B cell (primary cell): ENCODE measurements at regions of chr5 and their contacts with region 1.

Region 1: GRCh38 chr5:6632917-6633468 is at the starts of genes NSUN2 and SRD5A1:
- DNase-seq: peak; percentile 97
- ATAC-seq: peak; percentile 89
- H3K4me3 ChIP-seq: peak within 1 kb of the TSS; percentile 74 to 91 (median 84)
- H3K4me3 Mint-ChIP-seq: peak within 1 kb of the TSS; percentile 95
- H3K27ac ChIP-seq: peak within 1 kb of the TSS; percentile 98 to 99
- H3K27ac Mint-ChIP-seq: peak within 1 kb of the TSS; percentile 99
- H3K4me1 ChIP-seq: peaks cover 16 to 28% of the 10 kb centered on the region in 2 donors
- H3K4me1 Mint-ChIP-seq: peaks cover 38% of the 10 kb centered on the region
- H3K27me3 ChIP-seq: no peaks in the 10 kb centered on the region
- H3K27me3 Mint-ChIP-seq: no peaks in the 10 kb centered on the region
- CTCF ChIP-seq: no peak
- total RNA-seq, gene NSUN2: 83.7 and 85.0 TPM in 2 replicates
- total RNA-seq, gene SRD5A1: 20.8 and 29.2 TPM in 2 replicates

Region 2: GRCh38 chr5:5523066-5523505 is 1109.9 kb before region 1 on chr5:
- CTCF ChIA-PET with region 1: no interaction called
- POLR2A ChIA-PET with region 1: no interaction called
- intact Hi-C with region 1: loop called (anchors 1 kb)
- DNase-seq: peak; percentile 79
- ATAC-seq: peak; percentile 80
- H3K4me3 ChIP-seq: peak overlapping the region in 2 of 5 experiments; percentile 36 to 40
- H3K4me3 Mint-ChIP-seq: peak overlapping the region; percentile 78
- H3K27ac ChIP-seq: no peak overlapping the region
- H3K27ac Mint-ChIP-seq: peak overlapping the region; percentile 83
- H3K4me1 ChIP-seq: peaks cover 7 to 9% of the 10 kb centered on the region in 2 donors
- H3K4me1 Mint-ChIP-seq: peaks cover 14% of the 10 kb centered on the region
- H3K27me3 ChIP-seq: peaks cover 0 to 2% (median 0%) of the 10 kb centered on the region in 4 experiments
- H3K27me3 Mint-ChIP-seq: no peaks in the 10 kb centered on the region
- CTCF ChIP-seq: no peak

Region 3: GRCh38 chr5:5752844-5753243 is 880.1 kb before region 1 on chr5:
- CTCF ChIA-PET with region 1: no interaction called
- POLR2A ChIA-PET with region 1: no interaction called
- intact Hi-C with region 1: loop called (anchors 5 kb)
- DNase-seq: peak; percentile 63
- ATAC-seq: peak; percentile 65
- H3K4me3 ChIP-seq: peak overlapping the region in 1 of 5 experiments; percentile 40
- H3K4me3 Mint-ChIP-seq: peak overlapping the region; percentile 81
- H3K27ac ChIP-seq: peak overlapping the region; percentile 62
- H3K27ac Mint-ChIP-seq: peak overlapping the region; percentile 90
- H3K4me1 ChIP-seq: peaks cover 52 to 59% of the 10 kb centered on the region in 2 donors
- H3K4me1 Mint-ChIP-seq: peaks cover 69% of the 10 kb centered on the region
- H3K27me3 ChIP-seq: no peaks in the 10 kb centered on the region
- H3K27me3 Mint-ChIP-seq: no peaks in the 10 kb centered on the region
- CTCF ChIP-seq: no peak

Region 4: GRCh38 chr5:6483880-6484382 is 149.1 kb before region 1 on chr5:
- CTCF ChIA-PET with region 1: no interaction called
- POLR2A ChIA-PET with region 1: no interaction called
- intact Hi-C with region 1: no loop called
- DNase-seq: peak; percentile 69
- ATAC-seq: peak; percentile 86
- H3K4me3 ChIP-seq: peak overlapping the region in 1 of 5 experiments; percentile 12
- H3K4me3 Mint-ChIP-seq: peak overlapping the region; percentile 71
- H3K27ac ChIP-seq: peak overlapping the region; percentile 71 to 76
- H3K27ac Mint-ChIP-seq: peak overlapping the region; percentile 71
- H3K4me1 ChIP-seq: peaks cover 9 to 46% of the 10 kb centered on the region in 2 donors
- H3K4me1 Mint-ChIP-seq: peaks cover 55% of the 10 kb centered on the region
- H3K27me3 ChIP-seq: no peaks in the 10 kb centered on the region
- H3K27me3 Mint-ChIP-seq: no peaks in the 10 kb centered on the region
- CTCF ChIP-seq: no peak

Region 5: GRCh38 chr5:6659941-6660684 is 27.1 kb after region 1 on chr5:
- CTCF ChIA-PET with region 1: interaction called, 3 read pairs
- POLR2A ChIA-PET with region 1: interaction called, 9 read pairs
- intact Hi-C with region 1: loop called (anchors 1 kb)
- DNase-seq: peak; percentile 80
- ATAC-seq: peak; percentile 82
- H3K4me3 ChIP-seq: peak overlapping the region in 4 of 5 experiments; percentile 35 to 62 (median 54)
- H3K4me3 Mint-ChIP-seq: peak overlapping the region; percentile 78
- H3K27ac ChIP-seq: peak overlapping the region; percentile 82 to 87
- H3K27ac Mint-ChIP-seq: peak overlapping the region; percentile 93
- H3K4me1 ChIP-seq: peaks cover 20 to 26% of the 10 kb centered on the region in 2 donors
- H3K4me1 Mint-ChIP-seq: peaks cover 30% of the 10 kb centered on the region
- H3K27me3 ChIP-seq: no peaks in the 10 kb centered on the region
- H3K27me3 Mint-ChIP-seq: no peaks in the 10 kb centered on the region
- CTCF ChIP-seq: no peak

Region 6: GRCh38 chr5:7036192-7036835 is 403.3 kb after region 1 on chr5:
- CTCF ChIA-PET with region 1: no interaction called
- POLR2A ChIA-PET with region 1: no interaction called
- intact Hi-C with region 1: no loop called
- DNase-seq: no peak
- ATAC-seq: no peak
- H3K4me3 ChIP-seq: no peak overlapping the region
- H3K4me3 Mint-ChIP-seq: no peak overlapping the region
- H3K27ac ChIP-seq: no peak overlapping the region
- H3K27ac Mint-ChIP-seq: no peak overlapping the region
- H3K4me1 ChIP-seq: no peaks in the 10 kb centered on the region
- H3K4me1 Mint-ChIP-seq: no peaks in the 10 kb centered on the region
- H3K27me3 ChIP-seq: no peaks in the 10 kb centered on the region
- H3K27me3 Mint-ChIP-seq: no peaks in the 10 kb centered on the region
- CTCF ChIP-seq: no peak